Activated CD8-positive, alpha-beta memory T cell treated with anti-CD3 and anti-CD28 coated beads, Interleukin-2, amount 10 ng/mL, durations not matched to agents 7 days and 5 days (primary cell): ENCODE measurements at regions of chr15 and their contacts with region 1.

Region 1: GRCh38 chr15:40743921-40744814 is 10.9 kb downstream of the RMDN3 start:
- DNase-seq: peak; percentile 92
- ATAC-seq: peak; percentile 98
- H3K4me3 Mint-ChIP-seq: peak overlapping the region; percentile 39
- H3K27ac Mint-ChIP-seq: peak overlapping the region; percentile 97
- H3K4me1 Mint-ChIP-seq: peaks cover 52% of the 10 kb centered on the region
- H3K27me3 Mint-ChIP-seq: no peaks in the 10 kb centered on the region

Region 2: GRCh38 chr15:40684381-40684780 is 59.8 kb before region 1 on chr15:
- CTCF ChIA-PET with region 1: no interaction called
- DNase-seq: no peak
- ATAC-seq: no peak
- H3K4me3 Mint-ChIP-seq: no peak overlapping the region
- H3K27ac Mint-ChIP-seq: no peak overlapping the region
- H3K4me1 Mint-ChIP-seq: no peaks in the 10 kb centered on the region
- H3K27me3 Mint-ChIP-seq: no peaks in the 10 kb centered on the region

Region 3: DNA sequence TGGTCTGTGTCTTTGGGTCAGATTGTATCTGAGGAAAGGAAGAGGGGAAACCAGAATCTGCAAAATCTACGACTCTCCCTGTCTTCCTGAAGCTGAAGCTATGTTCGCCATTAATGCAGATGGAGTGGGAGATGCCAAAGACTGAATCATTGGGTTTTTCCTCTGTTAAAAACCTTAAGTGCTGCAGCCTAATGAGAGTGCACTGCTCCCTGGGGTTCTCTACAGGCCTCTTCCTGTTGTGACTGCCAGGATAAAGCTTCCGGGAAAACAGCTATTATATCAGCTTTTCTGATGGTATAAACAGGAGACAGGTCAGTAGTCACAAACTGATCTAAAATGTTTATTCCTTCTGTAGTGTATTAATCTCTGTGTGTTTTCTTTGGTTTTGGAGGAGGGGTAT is 13.1 kb before region 1 on chr15:
- CTCF ChIA-PET with region 1: interaction called, 11 read pairs
- DNase-seq: no peak
- ATAC-seq: no peak
- H3K4me3 Mint-ChIP-seq: no peak overlapping the region
- H3K27ac Mint-ChIP-seq: peak overlapping the region; percentile 41
- H3K4me1 Mint-ChIP-seq: no peaks in the 10 kb centered on the region
- H3K27me3 Mint-ChIP-seq: no peaks in the 10 kb centered on the region

Region 4: GRCh38 chr15:40754574-40754882 is 10.4 kb after region 1 on chr15:
- CTCF ChIA-PET with region 1: interaction called, 21 read pairs
- DNase-seq: peak; percentile 58
- ATAC-seq: peak; percentile 21
- H3K4me3 Mint-ChIP-seq: peak overlapping the region; percentile 88
- H3K27ac Mint-ChIP-seq: peak overlapping the region; percentile 99
- H3K4me1 Mint-ChIP-seq: peaks cover 26% of the 10 kb centered on the region
- H3K27me3 Mint-ChIP-seq: no peaks in the 10 kb centered on the region

Region 5: GRCh38 chr15:40793216-40793989 is 49.2 kb after region 1 on chr15:
- CTCF ChIA-PET with region 1: no interaction called
- DNase-seq: no peak
- ATAC-seq: peak; percentile 47
- H3K4me3 Mint-ChIP-seq: no peak overlapping the region
- H3K27ac Mint-ChIP-seq: no peak overlapping the region
- H3K4me1 Mint-ChIP-seq: peaks cover 16% of the 10 kb centered on the region
- H3K27me3 Mint-ChIP-seq: no peaks in the 10 kb centered on the region

Region 6: GRCh38 chr15:40814901-40815670 is 70.9 kb after region 1 on chr15:
- CTCF ChIA-PET with region 1: no interaction called
- DNase-seq: no peak
- ATAC-seq: no peak
- H3K4me3 Mint-ChIP-seq: no peak overlapping the region
- H3K27ac Mint-ChIP-seq: no peak overlapping the region
- H3K4me1 Mint-ChIP-seq: no peaks in the 10 kb centered on the region
- H3K27me3 Mint-ChIP-seq: peaks cover 2% of the 10 kb centered on the region